H1 (cell line): ENCODE measurements at regions of chr3 and their contacts with region 1.

Region 1: GRCh38 chr3:142929109-142929508 is 34.4 kb downstream of the PAQR9 start:
- DNase-seq: peak in 1 of 2 experiments; percentile 70
- H3K4me3 ChIP-seq: no peak overlapping the region
- H3K27ac ChIP-seq: no peak overlapping the region
- H3K4me1 ChIP-seq: no peaks in the 10 kb centered on the region
- H3K27me3 ChIP-seq: no peaks in the 10 kb centered on the region
- CTCF ChIP-seq: peak; percentile 74 to 78 (median 77)
- EP300 ChIP-seq: no peak
- POLR2A ChIP-seq: no peak
- RAD21 ChIP-seq: peak; percentile 57 to 72

Region 2: DNA sequence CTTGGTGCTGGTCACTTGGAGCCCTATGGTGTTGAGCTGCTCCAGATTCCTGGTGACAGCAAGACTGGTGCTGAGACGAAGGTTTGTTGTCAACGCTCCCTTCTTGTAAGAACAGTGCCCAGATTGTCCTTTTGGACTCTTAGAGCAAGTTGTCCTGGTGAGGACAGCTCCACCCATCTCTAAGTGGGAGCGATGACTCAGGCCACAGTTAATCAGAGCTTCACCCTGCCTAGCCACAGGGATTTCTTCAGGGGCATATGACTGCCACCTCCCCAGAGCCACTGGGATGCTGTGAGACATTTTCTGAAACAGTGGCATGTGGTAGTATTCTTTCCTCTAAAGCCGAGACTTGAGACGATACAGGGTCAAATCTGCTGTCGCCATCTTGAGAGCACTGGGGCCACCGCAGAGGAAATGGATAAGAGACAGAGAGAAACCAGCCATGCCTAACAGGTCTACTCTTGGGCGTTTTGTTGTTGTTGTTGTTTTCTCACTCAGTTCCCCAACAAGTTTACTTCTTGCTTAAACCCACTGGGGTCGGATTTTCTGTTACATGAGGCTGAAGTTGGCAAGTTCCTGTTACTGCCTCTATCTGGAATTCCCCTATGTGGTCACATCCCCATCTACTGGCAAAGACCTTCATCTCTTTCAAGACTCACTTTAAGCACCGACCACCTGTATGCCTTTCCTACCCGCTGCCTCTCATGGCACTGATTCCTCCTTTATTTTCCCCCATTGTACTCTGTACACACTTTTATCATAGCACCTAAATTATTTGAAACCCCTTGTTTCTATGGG is 24.3 kb before region 1 on chr3:
- CTCF ChIA-PET with region 1: interaction called, 13 read pairs
- POLR2A ChIA-PET with region 1: no interaction called
- DNase-seq: peak in 1 of 2 experiments; percentile 50
- H3K4me3 ChIP-seq: no peak overlapping the region
- H3K27ac ChIP-seq: no peak overlapping the region
- H3K4me1 ChIP-seq: no peaks in the 10 kb centered on the region
- H3K27me3 ChIP-seq: no peaks in the 10 kb centered on the region
- CTCF ChIP-seq: peak in 2 of 3 experiments; percentile 73 to 75; a peak in 3 of 4 replicates
- EP300 ChIP-seq: no peak
- POLR2A ChIP-seq: no peak
- RAD21 ChIP-seq: peak; percentile 92

Region 3: GRCh38 chr3:142940483-142940882 is 11.4 kb after region 1 on chr3:
- CTCF ChIA-PET with region 1: interaction called, 21 read pairs
- POLR2A ChIA-PET with region 1: no interaction called
- DNase-seq: no peak
- H3K4me3 ChIP-seq: no peak overlapping the region
- H3K27ac ChIP-seq: no peak overlapping the region
- H3K4me1 ChIP-seq: no peaks in the 10 kb centered on the region
- H3K27me3 ChIP-seq: no peaks in the 10 kb centered on the region
- CTCF ChIP-seq: no peak
- EP300 ChIP-seq: no peak
- POLR2A ChIP-seq: no peak
- RAD21 ChIP-seq: no peak

Region 4: DNA sequence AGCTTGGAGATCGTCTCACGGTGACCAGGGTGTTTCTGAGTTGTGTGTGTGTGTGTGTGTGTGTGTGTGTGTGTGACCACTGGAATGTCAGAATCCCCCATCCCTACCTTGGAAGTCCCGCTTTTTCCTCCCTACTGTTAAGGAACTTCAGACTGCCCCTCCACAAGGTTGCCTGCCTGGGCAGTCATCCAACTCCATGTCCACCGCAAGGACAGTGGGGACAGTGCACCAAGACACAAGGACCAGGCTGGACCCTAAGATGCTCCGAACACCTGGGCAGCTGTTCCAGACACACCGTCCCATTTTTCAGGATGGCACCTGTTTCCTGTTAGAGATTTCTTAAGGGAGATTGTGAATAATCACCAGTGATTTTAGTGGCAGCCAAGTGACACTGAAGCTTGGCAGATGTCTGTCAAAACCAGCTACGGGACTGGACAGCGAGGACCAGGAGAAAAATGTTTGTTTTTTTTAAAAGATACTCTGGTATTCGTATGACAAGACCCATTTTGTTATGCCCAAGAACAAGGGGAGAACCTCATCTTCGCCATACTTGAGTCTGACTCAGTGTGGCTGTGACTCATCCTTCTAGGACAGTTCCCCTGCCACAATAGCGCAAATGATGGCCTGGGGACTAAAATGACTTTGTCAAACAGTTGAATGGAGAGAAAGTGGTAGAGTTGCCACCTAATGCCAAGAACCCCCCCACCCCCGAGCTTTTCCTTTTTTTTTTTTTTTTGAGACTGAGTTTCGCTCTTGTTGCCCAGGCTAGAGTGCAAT is 18.9 kb after region 1 on chr3:
- CTCF ChIA-PET with region 1: interaction called, 21 read pairs
- POLR2A ChIA-PET with region 1: interaction called, 3 read pairs
- DNase-seq: no peak
- H3K4me3 ChIP-seq: peak overlapping the region in 1 of 4 experiments; percentile 9; a peak in 1 of 8 replicates
- H3K27ac ChIP-seq: no peak overlapping the region
- H3K4me1 ChIP-seq: peaks cover 0 to 3% (median 1%) of the 10 kb centered on the region in 4 experiments; a peak in 1 of 7 replicates
- H3K27me3 ChIP-seq: no peaks in the 10 kb centered on the region
- CTCF ChIP-seq: no peak
- EP300 ChIP-seq: no peak
- POLR2A ChIP-seq: no peak
- RAD21 ChIP-seq: no peak

Region 5: DNA sequence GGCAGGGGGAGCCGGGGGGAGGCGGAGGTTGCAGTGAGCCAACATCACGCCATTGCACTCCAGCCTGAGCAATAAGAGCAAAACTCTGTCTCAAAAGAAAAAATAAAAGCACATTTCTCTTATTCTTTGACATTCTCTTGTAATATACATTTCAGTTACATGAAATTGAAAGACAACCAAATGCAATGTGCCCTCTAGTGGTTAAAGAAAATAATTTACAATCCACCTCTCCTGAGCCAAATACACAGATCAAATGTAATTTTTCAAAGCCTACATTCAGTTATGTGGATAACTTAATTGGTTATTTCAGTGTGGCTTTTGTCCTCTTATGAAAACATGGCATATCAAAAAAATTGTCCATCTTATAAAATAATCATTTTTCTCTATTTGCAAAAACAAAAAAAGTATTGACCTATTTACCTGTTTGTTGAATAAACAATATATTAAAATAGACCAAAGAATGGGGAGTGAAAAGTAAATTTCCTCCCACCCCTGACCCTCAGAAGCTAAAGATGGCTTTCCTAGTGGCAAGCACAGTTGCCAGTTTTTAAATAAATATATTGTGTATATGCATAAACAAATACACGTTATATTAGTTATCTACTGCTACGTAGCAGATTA is 58.1 kb after region 1 on chr3:
- CTCF ChIA-PET with region 1: interaction called, 42 read pairs
- POLR2A ChIA-PET with region 1: no interaction called
- DNase-seq: no peak
- H3K4me3 ChIP-seq: no peak overlapping the region
- H3K27ac ChIP-seq: no peak overlapping the region
- H3K4me1 ChIP-seq: peaks cover 0 to 3% (median under 1%) of the 10 kb centered on the region in 4 experiments; a peak in 3 of 7 replicates
- H3K27me3 ChIP-seq: no peaks in the 10 kb centered on the region
- CTCF ChIP-seq: peak in 2 of 3 experiments; percentile 38 to 53; a peak in 2 of 4 replicates
- EP300 ChIP-seq: no peak
- POLR2A ChIP-seq: no peak
- RAD21 ChIP-seq: peak in 1 of 2 experiments; percentile 43; a peak in 3 of 4 replicates

Region 6: DNA sequence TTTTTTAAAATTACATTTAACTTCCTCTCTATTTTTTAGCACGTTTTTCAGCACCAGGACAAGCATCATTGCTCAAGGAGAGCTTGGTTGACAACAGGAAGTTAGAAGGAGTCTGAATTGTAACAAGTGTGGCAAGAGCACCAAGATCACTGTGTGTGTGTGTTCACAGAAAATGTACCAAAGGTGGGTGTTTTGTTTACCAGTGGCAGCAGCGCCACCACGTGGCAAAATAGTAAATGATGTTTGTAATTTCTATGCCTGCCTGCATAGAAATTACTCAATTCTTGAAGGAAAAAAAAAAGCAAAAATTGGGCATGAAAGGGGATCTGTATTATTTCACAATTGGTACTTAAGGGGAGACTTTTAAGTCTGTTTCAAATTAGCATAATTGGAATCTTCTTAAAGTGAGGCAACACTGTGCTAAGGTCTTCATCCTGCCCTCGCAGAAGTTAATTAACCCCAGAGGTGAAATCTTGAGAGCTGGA is 64.9 kb after region 1 on chr3:
- CTCF ChIA-PET with region 1: interaction called, 44 read pairs
- POLR2A ChIA-PET with region 1: no interaction called
- DNase-seq: peak in 1 of 2 experiments; percentile 67
- H3K4me3 ChIP-seq: no peak overlapping the region
- H3K27ac ChIP-seq: no peak overlapping the region
- H3K4me1 ChIP-seq: no peaks in the 10 kb centered on the region
- H3K27me3 ChIP-seq: no peaks in the 10 kb centered on the region
- CTCF ChIP-seq: peak; percentile 10 to 77 (median 77)
- EP300 ChIP-seq: no peak
- POLR2A ChIP-seq: no peak
- RAD21 ChIP-seq: peak; percentile 81 to 89